Activated CD8-positive, alpha-beta T cell treated with anti-CD3 and anti-CD28 coated beads, Interleukin-2, amount 10 ng/mL, durations not matched to agents 7 days and 5 days (primary cell): ENCODE measurements at regions of chr6 and their contacts with region 1.

Region 1: GRCh38 chr6:47631269-47631772 is 67.1 kb upstream of the ADGRF4 start:
- DNase-seq: no peak
- ATAC-seq: peak; percentile 67
- H3K4me3 Mint-ChIP-seq: no peak overlapping the region
- H3K27ac Mint-ChIP-seq: peak overlapping the region; percentile 5
- H3K4me1 Mint-ChIP-seq: peaks cover 12% of the 10 kb centered on the region
- H3K27me3 Mint-ChIP-seq: peaks cover 5% of the 10 kb centered on the region

Region 2: GRCh38 chr6:47413752-47414422 is 217.4 kb before region 1 on chr6:
- CTCF ChIA-PET with region 1: interaction called, 63 read pairs
- POLR2A ChIA-PET with region 1: interaction called, 6 read pairs
- DNase-seq: peak; percentile 65
- ATAC-seq: peak; percentile 81
- H3K4me3 Mint-ChIP-seq: peak overlapping the region; percentile 81
- H3K27ac Mint-ChIP-seq: peak overlapping the region; percentile 86
- H3K4me1 Mint-ChIP-seq: peaks cover 24% of the 10 kb centered on the region
- H3K27me3 Mint-ChIP-seq: peaks cover 4% of the 10 kb centered on the region

Region 3: GRCh38 chr6:47655719-47656595 is 24.6 kb after region 1 on chr6:
- CTCF ChIA-PET with region 1: interaction called, 31 read pairs
- POLR2A ChIA-PET with region 1: interaction called, 4 read pairs
- DNase-seq: peak; percentile 71
- ATAC-seq: peak; percentile 98
- H3K4me3 Mint-ChIP-seq: no peak overlapping the region
- H3K27ac Mint-ChIP-seq: peak overlapping the region; percentile 11
- H3K4me1 Mint-ChIP-seq: peaks cover 12% of the 10 kb centered on the region
- H3K27me3 Mint-ChIP-seq: peaks cover 6% of the 10 kb centered on the region

Region 4: GRCh38 chr6:47733879-47734558 is 102.7 kb after region 1 on chr6:
- CTCF ChIA-PET with region 1: interaction called, 63 read pairs
- POLR2A ChIA-PET with region 1: no interaction called
- DNase-seq: no peak
- ATAC-seq: no peak
- H3K4me3 Mint-ChIP-seq: no peak overlapping the region
- H3K27ac Mint-ChIP-seq: no peak overlapping the region
- H3K4me1 Mint-ChIP-seq: peaks cover 3% of the 10 kb centered on the region
- H3K27me3 Mint-ChIP-seq: no peaks in the 10 kb centered on the region

Region 5: GRCh38 chr6:47787620-47788497 is 156.5 kb after region 1 on chr6:
- CTCF ChIA-PET with region 1: interaction called, 33 read pairs
- POLR2A ChIA-PET with region 1: no interaction called
- DNase-seq: peak; percentile 66
- ATAC-seq: peak; percentile 85
- H3K4me3 Mint-ChIP-seq: no peak overlapping the region
- H3K27ac Mint-ChIP-seq: no peak overlapping the region
- H3K4me1 Mint-ChIP-seq: peaks cover 3% of the 10 kb centered on the region
- H3K27me3 Mint-ChIP-seq: peaks cover 40% of the 10 kb centered on the region

Region 6: DNA sequence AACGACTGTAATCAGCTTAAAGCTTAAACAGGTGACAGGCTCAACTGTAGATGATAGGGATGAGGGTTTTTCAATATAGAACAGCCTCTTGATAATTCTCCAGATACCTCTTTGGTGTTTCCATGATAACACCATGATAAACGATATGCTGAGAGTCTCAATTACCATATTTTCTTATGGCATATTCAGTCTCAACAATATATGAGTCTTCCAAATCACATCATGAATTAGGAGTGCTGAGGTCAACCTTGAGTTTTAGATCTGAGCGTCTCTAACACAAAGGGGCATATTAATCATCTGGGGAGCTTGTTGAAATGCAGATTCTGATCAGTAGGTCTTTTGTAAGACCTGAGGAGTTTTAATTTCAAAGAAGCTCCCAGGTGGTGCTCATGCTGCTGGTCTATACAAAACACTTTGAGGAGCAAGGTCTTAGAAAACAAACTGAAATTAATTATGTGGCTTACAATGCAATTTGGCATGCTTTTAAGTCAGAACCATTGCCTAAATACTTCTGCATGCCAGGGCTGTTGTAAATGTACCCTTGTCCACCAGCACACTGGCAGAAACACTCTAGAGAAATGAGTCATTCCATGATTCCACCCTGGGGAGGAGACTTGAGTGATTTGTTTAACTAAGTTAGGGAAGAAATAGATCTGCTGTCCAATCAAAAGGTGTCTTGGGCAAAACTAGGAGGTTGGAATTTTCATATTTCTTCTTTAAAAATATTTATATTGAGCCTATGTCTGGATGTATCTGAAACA is 430.1 kb after region 1 on chr6:
- CTCF ChIA-PET with region 1: no interaction called
- POLR2A ChIA-PET with region 1: no interaction called
- DNase-seq: no peak
- ATAC-seq: no peak
- H3K4me3 Mint-ChIP-seq: no peak overlapping the region
- H3K27ac Mint-ChIP-seq: no peak overlapping the region
- H3K4me1 Mint-ChIP-seq: no peaks in the 10 kb centered on the region
- H3K27me3 Mint-ChIP-seq: no peaks in the 10 kb centered on the region